ENCODE measurements at regions of chr3 and their contacts with region 1.

Region 1: DNA sequence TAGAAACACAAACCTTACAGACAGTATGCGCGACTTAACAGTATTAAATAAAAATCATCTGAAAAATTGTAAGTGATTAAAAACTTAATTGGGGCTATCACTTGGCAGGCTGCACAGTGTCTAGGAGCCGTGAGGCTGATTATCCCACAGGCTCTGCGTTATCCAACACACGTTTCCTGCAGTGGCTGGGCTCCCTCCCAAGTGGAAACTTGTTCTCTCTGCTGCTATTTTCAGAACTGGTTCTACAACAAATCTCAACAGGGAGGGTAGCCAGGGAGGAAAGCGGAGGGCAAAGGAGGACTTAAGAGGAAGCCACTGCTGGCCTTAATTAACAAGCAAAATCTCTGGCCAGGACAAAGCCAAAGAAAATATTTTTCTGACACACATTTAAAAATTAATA is 555.2 kb downstream of the MAGI1 start:
- DNase-seq: peak; percentile 44 to 88
- ATAC-seq: peak; percentile 83 to 94 (median 92)
- H3K4me3 ChIP-seq: peak overlapping the region in 1 of 10 donors; percentile 8
- H3K27ac ChIP-seq: peak overlapping the region in 9 of 10 donors; percentile 14 to 83 (median 76)
- H3K4me1 ChIP-seq: peaks cover 19 to 82% (median 69%) of the 10 kb centered on the region in 9 donors
- H3K27me3 ChIP-seq: no peaks in the 10 kb centered on the region
- CTCF ChIP-seq: no peak

Region 2: DNA sequence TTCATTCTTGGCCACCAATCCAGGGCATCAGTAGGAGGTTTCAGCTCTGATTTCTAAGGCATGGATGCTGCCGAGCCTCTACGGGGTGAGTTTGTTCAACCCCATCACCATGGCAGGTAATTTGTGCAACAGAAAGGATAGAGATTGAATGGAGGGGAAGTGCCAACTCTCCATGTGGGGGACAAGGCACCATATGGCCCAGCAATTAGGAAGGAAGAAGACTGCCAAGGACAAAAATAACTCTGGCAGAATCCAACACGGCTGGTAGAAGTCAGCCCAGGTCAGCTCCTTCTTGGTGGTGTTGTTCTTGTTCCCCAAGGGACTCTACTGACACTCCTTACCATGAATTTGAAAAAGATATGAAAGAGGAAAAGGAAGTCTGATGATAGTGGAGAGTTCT is 51.3 kb after region 1 on chr3:
- intact Hi-C with region 1: loop called in 2 of 10 experiments (anchors 5 to 10 kb)
- DNase-seq: no peak
- ATAC-seq: peak in 7 of 8 donors; percentile 42 to 74 (median 70)
- H3K4me3 ChIP-seq: no peak overlapping the region
- H3K27ac ChIP-seq: no peak overlapping the region
- H3K4me1 ChIP-seq: peaks cover 0 to 65% (median 25%) of the 10 kb centered on the region in 9 donors
- H3K27me3 ChIP-seq: no peaks in the 10 kb centered on the region
- CTCF ChIP-seq: no peak

Region 3: GRCh38 chr3:65548848-65549625 is 65.6 kb after region 1 on chr3:
- intact Hi-C with region 1: loop called in 1 of 10 experiments (anchors 10 kb)
- DNase-seq: peak; percentile 17 to 40
- ATAC-seq: peak; percentile 78 to 90 (median 84)
- H3K4me3 ChIP-seq: peak overlapping the region; percentile 45 to 70 (median 67)
- H3K27ac ChIP-seq: peak overlapping the region; percentile 5 to 85 (median 60)
- H3K4me1 ChIP-seq: peaks cover 0 to 55% (median 15%) of the 10 kb centered on the region in 9 donors
- H3K27me3 ChIP-seq: peaks cover 0 to 14% (median 0%) of the 10 kb centered on the region in 7 donors
- CTCF ChIP-seq: no peak

Measured in heart right ventricle (tissue), 16 donors.